A673 (cell line): ENCODE measurements at regions of chr3 and their contacts with region 1.

Region 1: DNA sequence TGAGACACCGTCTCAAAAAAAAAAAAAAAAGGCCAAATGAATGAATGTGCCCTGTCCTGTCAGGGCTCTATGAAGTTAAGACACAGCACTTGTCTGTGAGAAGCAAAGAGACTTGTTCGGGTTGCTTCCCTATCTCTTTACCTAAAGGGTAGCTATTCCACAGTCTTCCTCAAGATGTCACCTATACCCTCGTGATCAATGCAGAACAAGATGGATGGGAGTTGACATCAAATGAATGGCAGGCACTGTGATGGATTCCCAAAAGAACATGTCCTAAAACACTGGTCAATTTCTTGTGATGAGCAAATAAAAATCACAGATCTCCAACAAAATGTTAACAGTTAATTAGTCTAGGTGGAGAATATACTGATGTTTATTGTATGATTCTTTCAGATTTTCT is 9.5 kb downstream of the TADA3 start:
- DNase-seq: no peak
- H3K4me3 ChIP-seq: no peak overlapping the region
- H3K27ac ChIP-seq: no peak overlapping the region
- H3K4me1 ChIP-seq: no peaks in the 10 kb centered on the region
- H3K27me3 ChIP-seq: no peaks in the 10 kb centered on the region
- CTCF ChIP-seq: peak; percentile 36; the same call in 1 of the 2 replicates

Region 2: DNA sequence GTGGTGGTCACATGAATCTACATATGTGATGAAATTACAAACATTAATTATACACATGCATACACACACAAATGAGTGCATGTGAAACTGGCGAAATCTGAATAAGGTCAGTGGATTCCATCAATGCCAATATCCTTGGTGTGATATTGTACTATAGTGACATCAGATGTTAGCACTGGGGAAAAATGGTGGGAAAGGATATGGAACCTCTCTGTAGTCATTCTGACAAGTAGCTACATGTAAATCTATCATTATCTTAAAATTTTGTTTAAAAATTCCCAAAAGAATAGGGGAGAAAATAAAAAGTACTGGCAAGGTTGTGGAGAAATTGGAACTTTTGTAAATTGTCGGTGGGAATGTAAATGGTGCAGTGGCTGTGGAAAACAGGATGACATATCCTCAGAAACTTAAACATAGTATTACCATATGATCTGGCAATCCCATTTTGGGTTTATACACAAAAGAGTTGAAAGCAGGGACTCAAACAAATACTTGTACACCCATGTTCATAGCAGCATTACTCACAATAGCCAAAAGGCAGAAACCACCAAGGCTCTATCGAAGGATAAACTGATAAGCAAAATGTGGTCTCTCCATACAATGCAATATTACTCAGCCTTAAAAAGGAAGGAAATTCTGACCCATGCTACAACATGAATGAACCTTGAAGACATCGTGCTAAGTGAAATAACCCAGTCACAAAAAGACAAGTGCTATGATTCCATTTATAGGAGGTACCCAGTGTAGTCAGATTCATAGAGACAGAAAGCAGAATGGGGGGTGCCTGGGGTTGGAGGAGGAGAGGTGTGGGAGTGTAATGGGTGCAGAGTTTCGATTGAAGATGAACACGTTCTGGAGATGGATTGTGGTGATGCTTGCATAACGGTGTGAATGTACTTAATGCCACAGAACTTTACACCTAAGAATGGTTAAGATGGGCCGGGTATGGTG is 1346.2 kb after region 1 on chr3:
- CTCF ChIA-PET with region 1: no interaction called
- POLR2A ChIA-PET with region 1: interaction called, 13 read pairs
- intact Hi-C with region 1: no loop called
- DNase-seq: no peak
- H3K4me3 ChIP-seq: no peak overlapping the region
- H3K27ac ChIP-seq: no peak overlapping the region
- H3K4me1 ChIP-seq: no peaks in the 10 kb centered on the region
- H3K27me3 ChIP-seq: no peaks in the 10 kb centered on the region
- CTCF ChIP-seq: no peak